ENCODE measurements at regions of chr4 and their contacts with region 1.

Region 1: GRCh38 chr4:120156120-120156718 is 89.6 kb upstream of the MAD2L1 start:
- DNase-seq: peak; percentile 52
- ATAC-seq: peak; percentile 71
- H3K4me3 ChIP-seq: no peak overlapping the region
- H3K27ac ChIP-seq: no peak overlapping the region
- H3K4me1 ChIP-seq: no peaks in the 10 kb centered on the region
- H3K27me3 ChIP-seq: no peaks in the 10 kb centered on the region
- CTCF ChIP-seq: peak; percentile 48; the same call in 1 of the 2 replicates

Region 2: DNA sequence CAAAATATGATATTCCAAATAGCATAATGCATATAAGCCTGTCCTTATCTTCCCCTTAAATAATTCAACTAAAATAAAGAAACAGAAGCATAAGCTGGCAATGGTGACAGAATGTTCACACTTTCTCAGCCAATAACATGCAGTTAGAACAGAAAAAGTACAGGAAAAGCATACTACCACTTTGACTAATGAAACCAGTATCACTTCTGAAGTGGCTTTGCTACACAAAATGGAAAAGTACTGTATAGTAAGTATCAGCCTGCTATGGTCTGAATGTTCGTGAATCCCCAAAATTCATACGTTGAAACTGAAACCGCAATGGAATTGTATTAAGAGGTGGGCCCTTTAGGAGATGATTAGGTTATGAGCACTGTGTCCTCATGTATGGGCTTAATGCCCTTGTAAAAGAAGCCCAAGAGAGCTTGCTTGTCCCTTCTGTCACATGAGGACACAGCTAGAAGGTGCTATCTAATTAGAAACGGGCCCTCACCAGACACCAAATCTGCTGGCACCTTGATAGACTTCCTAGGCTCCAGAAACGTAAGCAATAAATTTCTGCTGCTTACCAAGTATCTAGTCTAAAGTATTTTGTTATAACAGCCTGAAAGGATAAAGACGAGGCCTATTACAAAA is 663.7 kb after region 1 on chr4:
- CTCF ChIA-PET with region 1: no interaction called
- POLR2A ChIA-PET with region 1: no interaction called
- in situ Hi-C with region 1: no loop called
- intact Hi-C with region 1: loop called (anchors 10 kb)
- DNase-seq: no peak
- ATAC-seq: no peak
- H3K4me3 ChIP-seq: no peak overlapping the region
- H3K27ac ChIP-seq: no peak overlapping the region
- H3K4me1 ChIP-seq: no peaks in the 10 kb centered on the region
- H3K27me3 ChIP-seq: no peaks in the 10 kb centered on the region
- CTCF ChIP-seq: no peak

Region 3: DNA sequence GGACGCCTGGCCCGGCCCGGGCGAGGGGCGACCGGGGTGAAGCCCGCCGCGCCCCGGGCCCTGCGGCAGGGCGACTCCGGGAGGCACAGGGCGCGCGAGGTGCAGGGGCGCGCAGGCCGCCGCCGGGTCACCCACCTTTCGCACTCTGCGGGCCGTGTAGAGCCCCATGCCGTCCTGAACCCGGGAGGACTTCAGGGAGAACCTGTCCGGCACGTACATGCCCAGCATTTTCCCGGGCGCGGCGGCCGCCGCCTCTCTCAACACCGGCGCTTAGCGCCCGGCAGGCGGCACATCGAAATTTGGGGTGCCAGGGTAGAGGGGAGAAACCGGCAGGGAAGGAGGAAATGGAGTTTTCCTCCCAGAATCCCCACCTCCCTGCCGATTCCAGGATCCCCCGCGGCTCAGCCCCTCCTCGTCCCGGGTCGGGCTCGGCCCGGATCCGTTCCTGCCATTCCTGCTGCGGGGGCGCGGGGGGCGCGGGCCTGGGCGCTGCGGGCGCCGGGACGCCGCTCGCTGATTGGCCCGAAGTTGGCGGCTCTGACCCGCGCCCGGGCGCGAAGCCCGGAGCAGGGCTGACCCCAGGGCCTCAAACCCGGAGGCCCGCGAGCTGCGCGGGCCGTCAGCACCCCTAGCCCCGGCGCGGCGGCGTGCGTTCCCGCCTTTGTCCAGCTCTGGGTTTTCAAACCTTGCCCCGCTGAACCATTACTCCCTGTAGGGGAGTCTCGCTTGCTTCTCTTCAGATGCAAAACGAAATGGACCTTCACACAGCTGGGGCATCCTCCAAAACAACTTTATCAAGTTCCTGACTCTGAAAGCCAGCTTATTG is 766.4 kb after region 1 on chr4 and contains the start of gene PRDM5:
- CTCF ChIA-PET with region 1: no interaction called
- POLR2A ChIA-PET with region 1: no interaction called
- in situ Hi-C with region 1: no loop called
- intact Hi-C with region 1: loop called (anchors 10 kb)
- DNase-seq: no peak
- ATAC-seq: peak; percentile 83
- H3K4me3 ChIP-seq: peak within 1 kb of the TSS; percentile 64 to 68
- H3K27ac ChIP-seq: peak within 1 kb of the TSS; percentile 84
- H3K4me1 ChIP-seq: 0 out of 2 replicates have a peak, but pooled peaks cover 5% of the 10 kb centered on the region
- H3K27me3 ChIP-seq: no peaks in the 10 kb centered on the region
- CTCF ChIP-seq: no peak; the same call in 1 of the 2 replicates
- total RNA-seq, gene PRDM5: 8.4 TPM

Region 4: DNA sequence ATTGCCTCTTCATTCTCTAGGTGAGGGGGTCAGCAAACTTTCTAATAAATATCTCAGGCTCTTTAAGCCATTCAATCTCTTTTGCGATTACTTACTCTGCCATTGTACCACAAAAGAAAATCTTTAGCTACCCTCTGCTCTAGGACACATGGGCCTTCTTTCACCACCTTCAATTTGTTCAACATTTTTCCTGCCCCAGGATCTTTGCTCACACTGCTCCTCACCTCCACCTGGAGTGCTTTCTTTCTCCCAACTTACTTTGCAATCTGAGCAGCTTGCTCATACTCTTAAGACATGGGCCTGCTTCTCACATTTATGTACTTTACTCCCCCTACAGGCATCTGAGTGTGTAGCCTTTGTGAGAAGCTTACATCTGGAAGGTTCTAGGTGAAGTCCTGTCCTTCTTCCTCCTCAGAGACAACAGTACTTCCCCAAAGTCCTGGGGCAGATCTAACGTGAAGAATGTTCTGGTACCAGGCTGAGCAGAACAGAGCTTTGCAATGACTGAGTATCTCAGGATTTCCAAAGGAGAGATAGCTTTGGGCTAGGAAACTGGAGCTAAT is 821.3 kb after region 1 on chr4:
- CTCF ChIA-PET with region 1: interaction called, 20 read pairs
- POLR2A ChIA-PET with region 1: no interaction called
- in situ Hi-C with region 1: no loop called
- intact Hi-C with region 1: no loop called
- DNase-seq: peak; percentile 12
- ATAC-seq: peak; percentile 69; the same call in 1 of the 2 replicates
- H3K4me3 ChIP-seq: no peak overlapping the region
- H3K27ac ChIP-seq: no peak overlapping the region
- H3K4me1 ChIP-seq: no peaks in the 10 kb centered on the region
- H3K27me3 ChIP-seq: no peaks in the 10 kb centered on the region
- CTCF ChIP-seq: peak; percentile 62

Region 5: DNA sequence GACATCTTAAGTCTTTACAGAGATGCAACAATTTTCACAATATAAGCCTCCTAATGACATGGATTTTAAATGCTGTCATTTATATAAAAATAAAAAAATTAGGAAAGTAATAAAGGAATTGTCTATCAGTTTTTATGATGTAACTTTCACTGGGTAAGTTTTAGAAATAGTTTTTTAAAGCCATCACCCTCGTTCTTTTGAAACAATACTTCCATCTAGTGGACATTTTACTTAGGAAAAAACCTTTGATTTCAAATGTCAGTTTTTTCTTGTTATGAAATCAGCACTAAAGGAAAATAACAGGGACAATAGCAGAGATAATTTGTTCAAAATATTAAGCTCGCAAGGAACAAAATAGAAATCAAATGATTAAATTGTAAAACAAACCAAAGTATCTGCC is 940.4 kb after region 1 on chr4:
- CTCF ChIA-PET with region 1: no interaction called
- POLR2A ChIA-PET with region 1: no interaction called
- in situ Hi-C with region 1: no loop called
- intact Hi-C with region 1: loop called (anchors 2 kb)
- DNase-seq: no peak
- ATAC-seq: no peak
- H3K4me3 ChIP-seq: no peak overlapping the region
- H3K27ac ChIP-seq: no peak overlapping the region
- H3K4me1 ChIP-seq: no peaks in the 10 kb centered on the region
- H3K27me3 ChIP-seq: no peaks in the 10 kb centered on the region
- CTCF ChIP-seq: peak; percentile 27; the same call in 1 of the 2 replicates

Region 6: GRCh38 chr4:122151982-122152710 is 1995.9 kb after region 1 on chr4 and contains the start of gene BLTP1:
- CTCF ChIA-PET with region 1: no interaction called
- POLR2A ChIA-PET with region 1: no interaction called
- in situ Hi-C with region 1: no loop called
- intact Hi-C with region 1: no loop called
- DNase-seq: peak; percentile 39
- ATAC-seq: peak; percentile 100
- H3K4me3 ChIP-seq: peak within 1 kb of the TSS; percentile 89 to 94
- H3K27ac ChIP-seq: peak within 1 kb of the TSS; percentile 87
- H3K4me1 ChIP-seq: peaks cover 6% of the 10 kb centered on the region
- H3K27me3 ChIP-seq: no peaks in the 10 kb centered on the region
- CTCF ChIP-seq: no peak
- total RNA-seq, gene BLTP1: 24.5 TPM